Right lobe of liver (tissue), 6 donors: ENCODE measurements at regions of chr17 and their contacts with region 1.

Region 1: DNA sequence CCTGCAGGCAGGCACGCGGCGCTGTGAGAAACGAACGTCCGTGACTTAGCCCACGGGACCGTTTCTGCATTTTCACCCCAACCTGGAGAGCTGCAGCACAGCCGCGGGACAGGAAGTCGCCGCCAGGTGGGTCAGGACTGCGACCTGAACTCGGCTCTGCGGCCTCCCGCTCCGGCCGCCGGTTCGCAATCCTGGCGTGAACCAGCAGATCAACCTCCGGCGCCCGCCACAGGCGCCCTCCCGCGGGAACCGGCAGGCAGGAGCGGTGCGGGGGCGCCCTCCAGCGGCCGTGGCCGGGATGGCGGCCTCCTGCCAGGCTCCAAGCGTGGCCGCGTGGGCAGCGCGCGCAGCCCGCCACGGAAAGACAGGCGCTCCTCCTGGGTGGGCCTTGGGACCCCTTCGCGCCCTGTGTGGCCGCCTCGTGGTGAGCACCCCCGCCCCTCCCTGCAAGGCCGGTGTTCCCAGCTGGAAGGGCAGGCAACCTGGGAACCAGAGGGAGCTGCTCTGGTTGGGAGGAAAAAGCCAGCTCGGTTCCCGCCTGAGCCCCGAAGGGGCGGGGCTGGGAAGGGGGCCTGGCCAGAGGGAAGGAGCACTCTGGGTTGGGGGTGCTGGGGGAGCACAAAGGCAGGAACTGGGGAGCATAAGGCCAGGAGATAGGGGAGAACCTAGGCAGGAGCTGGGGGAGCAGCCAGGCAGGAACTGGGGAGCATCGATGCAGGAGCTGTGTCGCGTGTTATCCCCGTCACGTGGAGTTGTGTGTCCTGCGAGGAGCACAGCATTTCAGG is 28.2 kb downstream of the ACTG1 start:
- DNase-seq: peak; percentile 90 to 92 (median 92)
- ATAC-seq: peak; percentile 85 to 94 (median 88)
- H3K4me3 ChIP-seq: peak overlapping the region; percentile 7 to 37 (median 23)
- H3K27ac ChIP-seq: no peak overlapping the region
- H3K4me1 ChIP-seq: peaks cover 0 to 14% (median 0%) of the 10 kb centered on the region in 4 donors
- H3K27me3 ChIP-seq: no peaks in the 10 kb centered on the region
- CTCF ChIP-seq: peak; percentile 97 to 100 (median 100)
- POLR2A ChIP-seq: no peak

Region 2: GRCh38 chr17:81253358-81254131 is 230.8 kb before region 1 on chr17:
- intact Hi-C with region 1: loop called (anchors 5 to 10 kb)
- DNase-seq: no peak
- ATAC-seq: peak; percentile 28 to 68 (median 42)
- H3K4me3 ChIP-seq: no peak overlapping the region
- H3K27ac ChIP-seq: no peak overlapping the region
- H3K4me1 ChIP-seq: peaks cover 0 to 22% (median 0%) of the 10 kb centered on the region in 4 donors
- H3K27me3 ChIP-seq: no peaks in the 10 kb centered on the region
- CTCF ChIP-seq: peak; percentile 64 to 80 (median 68)
- POLR2A ChIP-seq: no peak

Region 3: GRCh38 chr17:81285179-81285878 is 199.1 kb before region 1 on chr17:
- intact Hi-C with region 1: loop called in 1 of 2 experiments (anchors 10 kb)
- DNase-seq: peak; percentile 76 to 89 (median 85)
- ATAC-seq: peak; percentile 80 to 88 (median 81)
- H3K4me3 ChIP-seq: peak overlapping the region in 2 of 3 donors; percentile 5 to 24
- H3K27ac ChIP-seq: peak overlapping the region; percentile 31 to 80 (median 59)
- H3K4me1 ChIP-seq: no peaks in the 10 kb centered on the region
- H3K27me3 ChIP-seq: no peaks in the 10 kb centered on the region
- CTCF ChIP-seq: no peak
- POLR2A ChIP-seq: no peak

Region 4: GRCh38 chr17:81365148-81365600 is 119.2 kb before region 1 on chr17:
- intact Hi-C with region 1: no loop called
- DNase-seq: peak in 1 of 3 donors; percentile 53
- ATAC-seq: peak; percentile 17 to 54 (median 30)
- H3K4me3 ChIP-seq: no peak overlapping the region
- H3K27ac ChIP-seq: no peak overlapping the region
- H3K4me1 ChIP-seq: no peaks in the 10 kb centered on the region
- H3K27me3 ChIP-seq: no peaks in the 10 kb centered on the region
- CTCF ChIP-seq: no peak
- POLR2A ChIP-seq: no peak

Region 5: DNA sequence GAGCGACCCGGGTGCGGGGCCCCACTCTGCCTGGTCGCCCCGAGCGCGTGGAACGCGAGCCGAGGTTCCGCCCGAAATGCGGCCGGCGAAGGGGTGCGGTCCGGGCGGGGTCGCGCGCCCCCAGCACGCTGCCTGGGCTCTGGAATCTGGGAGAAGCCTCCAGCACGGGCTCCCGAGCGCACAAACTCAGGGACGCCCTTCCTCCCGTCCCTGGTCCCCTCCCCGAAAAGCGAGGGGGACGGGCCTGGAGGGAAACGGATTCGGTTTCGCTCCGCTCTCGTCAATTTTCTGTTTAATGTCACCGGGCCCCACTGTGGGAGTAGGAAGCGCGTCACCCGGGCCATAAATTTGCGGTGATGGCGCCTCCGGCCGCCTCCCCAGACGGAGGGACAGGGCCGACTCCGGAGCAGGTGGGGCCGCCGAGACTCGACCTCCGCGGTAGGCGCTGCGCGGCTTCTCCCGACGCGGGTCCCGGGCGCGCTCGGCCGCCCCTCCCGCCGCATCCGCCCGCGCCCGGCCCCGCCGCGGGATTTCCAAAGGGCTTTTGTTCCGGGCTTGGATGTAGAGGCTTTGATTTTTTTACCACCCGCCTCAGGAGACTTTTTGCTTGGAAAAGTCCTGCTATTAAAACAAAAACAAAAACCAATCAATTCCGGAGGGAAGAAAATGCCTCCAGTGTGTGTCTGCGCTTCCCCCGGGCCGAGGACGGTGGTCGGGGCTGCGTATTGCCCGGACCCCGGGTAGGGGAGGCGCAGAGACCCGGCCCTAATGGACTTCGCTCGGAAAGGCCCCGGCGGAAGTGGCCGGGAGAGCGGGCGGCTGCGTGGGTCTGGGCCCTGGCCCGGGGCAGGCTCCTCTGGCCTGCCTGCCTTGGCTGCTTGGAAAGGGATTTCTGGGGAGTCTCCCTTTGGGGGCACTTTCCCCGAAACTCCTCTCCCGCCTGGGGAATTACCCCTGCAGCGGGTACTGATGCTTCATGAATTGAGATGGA is 97.0 kb before region 1 on chr17:
- intact Hi-C with region 1: loop called in 1 of 2 experiments (anchors 10 kb)
- DNase-seq: peak in 1 of 3 donors; percentile 55
- ATAC-seq: peak; percentile 40 to 56 (median 44)
- H3K4me3 ChIP-seq: peak overlapping the region; percentile 73 to 82 (median 73)
- H3K27ac ChIP-seq: peak overlapping the region; percentile 93 to 97 (median 96)
- H3K4me1 ChIP-seq: peaks cover 0 to 38% (median 18%) of the 10 kb centered on the region in 4 donors
- H3K27me3 ChIP-seq: no peaks in the 10 kb centered on the region
- CTCF ChIP-seq: peak in 1 of 4 donors; percentile 3
- POLR2A ChIP-seq: peak; percentile 60